Mammary epithelial cell (primary cell): ENCODE measurements at regions of chr6 and their contacts with region 1.

Region 1: GRCh38 chr6:154733012-154733625 is at the start of gene SCAF8:
- DNase-seq: peak; percentile 82
- H3K4me3 ChIP-seq: peak within 1 kb of the TSS; percentile 92 to 99 (median 97)
- H3K27ac ChIP-seq: peak within 1 kb of the TSS; percentile 91
- H3K4me1 ChIP-seq: peaks cover 10% of the 10 kb centered on the region
- H3K27me3 ChIP-seq: no peaks in the 10 kb centered on the region
- CTCF ChIP-seq: peak; percentile 65 to 71
- total RNA-seq, gene SCAF8: 31.8 to 36.9 TPM

Region 2: DNA sequence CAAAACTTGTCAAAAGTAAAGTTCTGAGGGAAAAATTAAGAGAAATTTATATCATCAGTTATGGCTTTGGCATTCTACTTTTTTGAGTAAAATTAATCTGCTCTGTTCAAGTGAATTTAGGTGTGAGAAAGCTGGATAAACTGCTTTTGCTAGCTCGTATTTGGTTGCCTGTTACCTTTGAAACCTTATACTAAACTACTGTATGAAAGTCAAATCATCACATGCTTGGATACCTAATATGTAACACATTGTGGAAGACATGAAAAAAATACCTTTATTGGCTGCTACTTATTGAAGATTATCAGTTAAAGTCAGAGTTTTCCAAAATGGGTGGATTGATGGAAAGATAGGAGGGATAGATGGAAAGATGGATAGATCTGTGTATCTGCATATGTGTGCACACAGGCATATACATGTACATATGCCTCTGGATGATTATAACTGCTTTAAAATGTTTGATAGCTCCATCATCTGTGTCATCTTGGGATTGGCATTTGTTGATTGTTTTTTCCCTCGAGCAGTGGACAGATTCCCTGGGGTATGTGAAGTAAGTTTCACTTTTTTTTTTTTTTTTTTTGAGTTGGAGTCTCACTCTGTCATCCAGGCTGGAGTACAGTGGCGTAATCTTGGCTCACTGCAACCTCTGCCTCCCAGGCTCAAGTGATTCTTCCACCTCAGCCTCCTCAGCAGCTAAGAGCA is 24.4 kb after region 1 on chr6:
- CTCF ChIA-PET with region 1: no interaction called
- dilution Hi-C with region 1: no loop called
- in situ Hi-C with region 1: no loop called
- intact Hi-C with region 1: loop called (anchors 1 kb)
- DNase-seq: peak; percentile 43
- H3K4me3 ChIP-seq: no peak overlapping the region
- H3K27ac ChIP-seq: peak overlapping the region; percentile 71
- H3K4me1 ChIP-seq: peaks cover 37% of the 10 kb centered on the region
- H3K27me3 ChIP-seq: no peaks in the 10 kb centered on the region
- CTCF ChIP-seq: no peak

Region 3: GRCh38 chr6:155117266-155117665 is 384.1 kb after region 1 on chr6:
- CTCF ChIA-PET with region 1: no interaction called
- dilution Hi-C with region 1: no loop called
- in situ Hi-C with region 1: no loop called
- intact Hi-C with region 1: no loop called
- DNase-seq: no peak
- H3K4me3 ChIP-seq: no peak overlapping the region
- H3K27ac ChIP-seq: no peak overlapping the region
- H3K4me1 ChIP-seq: no peaks in the 10 kb centered on the region
- H3K27me3 ChIP-seq: no peaks in the 10 kb centered on the region
- CTCF ChIP-seq: no peak